Tibial artery (tissue), 4 donors: ENCODE measurements at regions of chr1 and their contacts with region 1.

Region 1: DNA sequence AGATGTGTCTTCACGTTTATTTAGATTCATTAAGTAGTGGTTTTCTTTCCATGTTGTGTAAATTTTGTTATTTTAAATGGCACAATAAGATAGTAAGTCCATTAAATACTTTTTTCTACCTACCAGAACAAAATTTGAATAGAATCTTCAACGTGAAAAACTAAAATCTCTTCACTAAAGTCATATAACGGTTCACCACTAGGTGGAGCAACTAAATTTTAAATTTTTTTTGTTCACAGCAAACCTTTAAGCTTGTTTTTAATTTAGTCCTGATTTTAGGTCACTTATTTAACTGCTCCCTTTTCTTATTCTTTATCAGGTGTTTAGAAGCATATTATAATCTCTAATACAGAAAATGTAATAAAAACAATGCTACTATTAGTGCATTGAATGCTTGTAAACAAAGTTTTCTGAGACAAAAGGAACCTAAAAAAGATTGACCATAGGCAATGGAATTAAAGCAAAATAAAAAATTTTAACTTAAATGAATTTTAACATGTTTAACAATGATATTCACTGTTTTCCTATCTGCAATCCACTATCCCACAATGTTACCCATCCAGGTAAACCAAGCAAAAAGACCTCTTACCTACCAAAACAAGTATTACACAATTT is 28.3 kb upstream of the PKN2 start:
- DNase-seq: no peak
- H3K4me3 ChIP-seq: no peak overlapping the region
- H3K27ac ChIP-seq: no peak overlapping the region
- H3K4me1 ChIP-seq: no peaks in the 10 kb centered on the region
- H3K27me3 ChIP-seq: no peaks in the 10 kb centered on the region
- CTCF ChIP-seq: peak; percentile 52 to 54

Region 2: GRCh38 chr1:88708021-88708420 is 52.2 kb after region 1 on chr1:
- intact Hi-C with region 1: no loop called
- DNase-seq: no peak
- H3K4me3 ChIP-seq: no peak overlapping the region
- H3K27ac ChIP-seq: no peak overlapping the region
- H3K4me1 ChIP-seq: no peaks in the 10 kb centered on the region
- H3K27me3 ChIP-seq: no peaks in the 10 kb centered on the region
- CTCF ChIP-seq: no peak

Region 3: DNA sequence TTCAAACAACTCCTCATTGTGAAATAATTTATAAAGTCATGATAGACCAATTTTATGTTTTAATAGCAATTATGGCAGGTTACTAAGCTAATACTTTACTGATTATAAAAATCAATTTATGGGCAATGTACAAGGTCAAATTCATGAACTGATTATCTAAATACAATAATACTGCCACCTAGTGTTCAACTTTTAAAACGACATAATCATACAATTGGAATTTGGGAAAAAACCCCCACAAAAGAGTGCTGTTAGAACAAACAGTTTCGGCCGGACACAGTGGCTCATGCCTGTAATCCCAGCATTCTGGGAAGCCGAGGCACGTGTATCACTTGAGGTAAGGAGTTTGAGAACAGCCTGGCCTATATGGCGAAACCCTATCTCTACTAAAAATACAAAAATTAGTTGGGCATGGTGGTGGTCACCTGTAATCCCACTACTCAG is 221.6 kb after region 1 on chr1:
- intact Hi-C with region 1: loop called (anchors 5 kb)
- DNase-seq: no peak
- H3K4me3 ChIP-seq: no peak overlapping the region
- H3K27ac ChIP-seq: no peak overlapping the region
- H3K4me1 ChIP-seq: peaks cover 0 to 25% (median 11%) of the 10 kb centered on the region in 4 donors
- H3K27me3 ChIP-seq: no peaks in the 10 kb centered on the region
- CTCF ChIP-seq: peak; percentile 47 to 48

Region 4: DNA sequence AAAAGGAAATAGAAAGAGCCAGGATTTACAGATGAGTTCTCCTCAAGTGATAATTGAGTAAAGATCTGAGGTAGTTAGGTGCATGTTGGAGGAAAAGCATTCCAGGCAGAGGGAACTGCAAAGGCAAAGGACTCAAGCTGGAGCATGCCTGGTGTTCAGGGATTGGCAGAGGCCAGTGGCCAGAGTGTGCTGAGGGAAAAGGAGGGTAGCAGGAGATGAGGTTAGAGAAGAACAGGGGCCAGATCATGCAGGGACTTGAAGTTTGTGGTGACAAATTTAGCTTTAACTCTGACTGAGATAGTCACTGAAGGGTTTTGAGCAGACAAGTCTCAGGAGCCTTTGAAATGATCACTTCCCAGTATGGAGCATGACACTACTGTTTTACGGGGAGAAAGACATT is 254.6 kb after region 1 on chr1:
- intact Hi-C with region 1: no loop called
- DNase-seq: no peak
- H3K4me3 ChIP-seq: no peak overlapping the region
- H3K27ac ChIP-seq: no peak overlapping the region
- H3K4me1 ChIP-seq: peaks cover 0 to 4% (median 0%) of the 10 kb centered on the region in 4 donors
- H3K27me3 ChIP-seq: no peaks in the 10 kb centered on the region
- CTCF ChIP-seq: no peak